KBM-7 (cell line): ENCODE measurements at regions of chr3 and their contacts with region 1.

Region 1: DNA sequence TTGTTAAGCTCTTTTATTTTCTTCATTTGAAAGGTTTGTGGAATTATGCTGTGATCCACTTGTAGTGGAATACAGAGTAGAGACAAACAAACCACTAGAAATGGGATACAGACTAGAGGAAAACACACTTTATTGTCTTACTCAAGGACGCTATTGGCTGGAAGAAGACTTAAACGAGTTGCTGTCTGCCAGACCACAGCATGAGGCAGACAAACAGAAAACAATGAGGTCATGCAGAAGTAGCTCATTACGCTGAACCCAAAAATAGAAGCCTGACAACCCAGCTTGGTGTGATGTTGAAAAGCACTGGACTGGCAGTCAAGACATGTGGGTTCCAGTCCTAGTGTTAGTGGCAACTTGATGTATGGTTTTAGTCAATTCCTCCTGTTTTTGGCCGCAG is 62.4 kb upstream of the P3H2 start:
- DNase-seq: no peak

Region 2: GRCh38 chr3:189961525-189962161 is 221.5 kb before region 1 on chr3:
- in situ Hi-C with region 1: loop called (anchors 25 kb)
- DNase-seq: peak; percentile 75

Region 3: DNA sequence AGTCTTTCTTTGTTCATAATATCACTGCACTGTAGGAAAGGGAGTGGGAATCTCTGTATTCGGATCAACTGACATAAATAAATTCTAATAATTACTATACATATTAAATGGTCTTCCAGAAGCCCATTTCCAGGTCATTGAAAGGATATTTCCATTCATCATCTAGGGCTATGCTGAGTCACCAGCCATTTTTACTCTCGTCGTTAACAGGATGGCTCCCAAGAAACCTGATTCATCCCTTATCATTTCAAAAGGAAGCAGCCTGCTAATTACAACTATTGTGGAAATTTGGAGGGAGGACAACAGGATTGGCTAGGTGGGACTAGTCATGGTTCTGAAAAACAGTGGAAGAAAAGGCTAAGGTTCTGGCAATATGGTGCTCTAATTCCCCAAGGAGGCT is 665.7 kb after region 1 on chr3:
- in situ Hi-C with region 1: no loop called
- DNase-seq: no peak